ENCODE measurements at regions of chr19 and their contacts with region 1.

Region 1: DNA sequence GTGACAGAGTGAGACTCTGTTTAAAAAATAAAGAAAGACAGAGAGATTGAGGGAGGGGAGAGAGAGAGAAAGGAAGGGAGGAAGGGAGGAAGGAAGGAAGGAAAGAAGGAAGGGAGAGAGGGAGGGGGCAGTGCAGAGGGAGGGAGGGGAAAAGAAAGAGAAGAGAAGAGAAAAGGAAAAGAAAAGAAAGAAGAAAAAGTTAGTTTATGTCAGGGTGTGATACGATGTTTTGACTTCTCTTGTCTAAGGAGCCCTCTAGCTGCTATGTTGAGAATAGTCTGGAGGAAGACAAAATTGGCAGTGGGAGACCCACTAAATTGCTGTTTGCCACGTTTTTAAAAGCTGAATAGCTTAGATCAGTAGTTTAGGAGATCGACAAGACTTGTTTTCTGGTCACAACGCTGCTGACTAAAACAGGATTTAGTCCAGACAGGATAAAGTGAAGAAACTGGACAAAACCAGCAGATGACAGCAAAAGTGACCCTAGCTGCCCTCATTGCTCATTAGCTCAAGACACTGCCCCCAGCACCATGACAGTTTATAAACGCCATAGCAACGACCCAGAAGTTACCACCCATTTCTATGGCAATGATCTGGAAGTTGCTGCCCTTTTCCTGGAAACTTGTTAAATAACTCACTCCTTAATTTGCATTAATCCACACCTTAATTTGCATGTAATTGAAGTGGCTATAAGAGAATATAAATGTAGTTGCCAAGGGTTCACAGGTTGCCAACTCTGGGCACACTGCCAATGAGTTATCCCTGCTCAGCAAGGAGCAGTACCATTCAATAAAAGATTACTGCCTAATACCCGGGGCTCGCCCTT is 11.1 kb downstream of the TEX101 start:
- DNase-seq: no peak
- H3K4me3 Mint-ChIP-seq: no peak overlapping the region
- H3K27ac Mint-ChIP-seq: no peak overlapping the region
- H3K4me1 Mint-ChIP-seq: peaks cover 8% of the 10 kb centered on the region
- H3K27me3 Mint-ChIP-seq: no peaks in the 10 kb centered on the region

Region 2: GRCh38 chr19:43191191-43191590 is 234.6 kb before region 1 on chr19:
- CTCF ChIA-PET with region 1: no interaction called
- intact Hi-C with region 1: no loop called
- DNase-seq: no peak
- H3K4me3 Mint-ChIP-seq: no peak overlapping the region
- H3K27ac Mint-ChIP-seq: no peak overlapping the region
- H3K4me1 Mint-ChIP-seq: no peaks in the 10 kb centered on the region
- H3K27me3 Mint-ChIP-seq: peaks cover 18% of the 10 kb centered on the region

Region 3: DNA sequence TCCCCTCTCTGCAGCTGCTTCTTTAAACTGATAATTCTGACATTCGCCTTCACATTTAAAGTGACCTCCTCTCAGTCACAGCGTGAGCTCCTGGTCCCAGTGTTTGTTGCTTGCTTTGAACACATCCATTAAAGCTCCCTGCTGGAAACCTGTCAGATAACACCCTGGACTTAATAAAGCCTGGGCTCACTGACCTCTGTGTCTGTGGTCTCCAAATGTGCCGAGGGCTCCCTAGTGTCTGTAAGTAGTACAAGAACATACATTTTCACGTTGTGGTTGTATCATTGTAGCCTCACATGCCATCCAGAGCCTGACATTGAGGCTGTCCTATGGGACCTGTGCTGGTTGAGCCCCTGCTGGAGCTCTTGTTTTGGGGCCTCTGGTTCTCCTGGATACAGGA is 217.8 kb before region 1 on chr19:
- CTCF ChIA-PET with region 1: no interaction called
- intact Hi-C with region 1: loop called (anchors 10 kb)
- DNase-seq: no peak
- H3K4me3 Mint-ChIP-seq: no peak overlapping the region
- H3K27ac Mint-ChIP-seq: no peak overlapping the region
- H3K4me1 Mint-ChIP-seq: no peaks in the 10 kb centered on the region
- H3K27me3 Mint-ChIP-seq: peaks cover 12% of the 10 kb centered on the region

Region 4: DNA sequence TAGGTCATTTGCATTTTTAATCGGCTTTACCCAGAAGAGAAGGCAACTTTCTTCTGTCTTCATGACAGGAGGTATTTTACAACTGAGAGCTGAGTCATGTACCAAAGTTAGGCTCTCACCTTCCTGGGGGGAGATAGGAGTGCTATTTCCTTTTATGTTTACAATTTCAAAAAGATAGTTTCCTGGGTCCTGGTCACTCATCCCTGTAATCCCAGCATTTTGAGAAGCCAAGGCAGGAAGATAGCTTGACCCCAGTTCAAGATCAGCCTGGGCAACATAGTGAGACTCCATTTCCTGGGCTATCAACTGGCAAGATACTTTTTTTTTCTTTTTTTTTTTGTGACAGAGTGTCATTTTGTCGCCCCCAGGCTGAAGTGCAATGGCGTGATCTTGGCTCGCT is 32.0 kb after region 1 on chr19:
- CTCF ChIA-PET with region 1: no interaction called
- intact Hi-C with region 1: no loop called
- DNase-seq: no peak
- H3K4me3 Mint-ChIP-seq: no peak overlapping the region
- H3K27ac Mint-ChIP-seq: no peak overlapping the region
- H3K4me1 Mint-ChIP-seq: peaks cover 16% of the 10 kb centered on the region
- H3K27me3 Mint-ChIP-seq: no peaks in the 10 kb centered on the region

Region 5: DNA sequence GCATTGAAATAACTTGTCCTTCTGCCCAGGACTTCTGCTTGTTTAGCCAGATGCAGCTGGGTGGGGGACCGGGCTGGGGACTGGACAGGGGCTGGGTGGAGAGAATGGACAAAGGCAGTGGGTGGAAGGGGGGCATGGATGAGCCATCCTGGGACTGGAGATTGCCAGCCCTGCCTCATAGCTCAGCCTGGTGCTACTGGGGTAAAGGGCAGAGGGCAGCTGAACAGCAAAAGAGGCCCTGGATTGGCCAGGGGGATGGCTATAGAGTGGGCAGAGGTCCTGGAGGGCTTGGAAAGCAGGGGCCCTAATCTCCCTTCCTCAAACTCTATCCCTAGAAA is 261.8 kb after region 1 on chr19:
- CTCF ChIA-PET with region 1: no interaction called
- intact Hi-C with region 1: no loop called
- DNase-seq: no peak
- H3K4me3 Mint-ChIP-seq: no peak overlapping the region
- H3K27ac Mint-ChIP-seq: no peak overlapping the region
- H3K4me1 Mint-ChIP-seq: no peaks in the 10 kb centered on the region
- H3K27me3 Mint-ChIP-seq: no peaks in the 10 kb centered on the region

Region 6: GRCh38 chr19:43809762-43810696 is 384.2 kb after region 1 on chr19:
- CTCF ChIA-PET with region 1: no interaction called
- intact Hi-C with region 1: loop called (anchors 5 kb)
- DNase-seq: no peak
- H3K4me3 Mint-ChIP-seq: no peak overlapping the region
- H3K27ac Mint-ChIP-seq: no peak overlapping the region
- H3K4me1 Mint-ChIP-seq: peaks cover 2% of the 10 kb centered on the region
- H3K27me3 Mint-ChIP-seq: peaks cover 3% of the 10 kb centered on the region